Activated naive CD8-positive, alpha-beta T cell treated with anti-CD3 and anti-CD28 coated beads, Interleukin-2, amount 10 ng/mL, durations not matched to agents 7 days and 5 days (primary cell): ENCODE measurements at regions of chr16 and their contacts with region 1.

Region 1: DNA sequence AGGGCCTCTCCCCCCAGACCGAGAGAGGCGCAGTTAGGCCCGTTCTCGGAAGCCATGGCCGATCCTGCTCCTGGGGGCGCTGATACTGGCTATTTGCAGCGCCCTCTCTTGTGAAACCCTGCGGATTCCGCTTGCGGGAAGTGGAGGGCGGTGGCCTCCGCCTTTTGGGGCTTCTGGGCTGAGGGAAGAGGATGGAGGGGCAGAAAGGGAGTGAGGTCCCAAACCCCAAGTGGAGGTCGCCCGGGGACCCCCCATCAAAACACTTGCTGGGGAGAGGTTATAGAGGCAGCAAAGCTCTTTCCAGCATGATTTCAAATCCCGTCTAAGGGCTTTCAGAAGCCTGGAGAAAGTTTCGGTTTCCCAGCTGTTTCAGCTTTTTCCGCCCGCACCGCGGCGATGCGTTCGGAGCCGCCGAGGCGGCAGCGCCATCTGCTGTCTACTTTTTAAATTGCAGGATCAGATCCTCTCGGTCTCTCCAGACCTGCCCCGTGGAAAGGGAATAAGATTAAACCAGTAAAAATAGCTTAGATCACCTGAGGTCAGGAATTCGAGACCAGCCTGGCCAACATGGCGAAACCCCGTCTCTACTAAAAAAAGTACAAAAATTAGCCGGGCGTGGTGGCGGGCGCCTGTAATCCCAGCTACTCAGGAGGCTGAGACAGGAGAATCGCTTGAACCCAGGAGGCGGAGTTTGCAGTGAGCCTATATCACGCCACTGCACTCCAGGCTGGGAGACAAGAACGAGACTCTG is 15.8 kb downstream of the SNX20 start:
- DNase-seq: peak; percentile 87
- ATAC-seq: peak; percentile 26
- H3K4me3 Mint-ChIP-seq: peak overlapping the region; percentile 79
- H3K27ac Mint-ChIP-seq: peak overlapping the region; percentile 93
- H3K4me1 Mint-ChIP-seq: peaks cover 40% of the 10 kb centered on the region
- H3K27me3 Mint-ChIP-seq: no peaks in the 10 kb centered on the region

Region 2: DNA sequence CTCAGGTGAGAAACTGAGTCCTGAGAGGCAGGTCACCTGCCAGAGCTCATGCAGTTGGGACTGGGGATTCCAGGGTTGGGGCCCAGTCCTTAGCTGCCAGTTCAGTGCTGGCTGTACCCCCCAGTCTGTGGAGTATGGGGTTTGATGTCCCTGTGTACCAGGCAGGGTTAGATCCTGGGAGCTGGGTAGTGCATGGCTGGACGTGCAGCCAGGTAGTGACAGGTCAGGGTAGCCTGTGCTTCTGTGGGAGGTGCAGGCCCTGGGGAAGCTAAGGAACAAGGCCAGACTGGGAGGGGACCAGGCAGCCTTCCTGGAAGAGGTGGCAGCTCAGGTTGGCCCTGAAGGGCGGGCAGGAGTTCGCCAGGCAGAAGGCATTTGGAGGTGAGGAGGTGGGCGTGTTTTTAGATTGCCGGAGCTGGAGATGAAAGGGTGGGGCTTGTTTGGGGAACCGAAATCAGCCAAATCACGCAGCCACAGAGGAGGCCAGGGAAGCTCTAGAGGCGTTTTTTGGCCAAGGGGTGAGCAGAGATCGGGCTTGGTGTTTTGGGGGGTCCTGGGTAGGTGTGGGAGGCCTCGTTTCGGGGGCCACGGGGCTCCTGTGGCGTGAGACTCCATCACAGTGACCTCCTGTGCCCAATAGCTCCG is 391.5 kb before region 1 on chr16:
- POLR2A ChIA-PET with region 1: interaction called, 12 read pairs
- DNase-seq: no peak
- ATAC-seq: peak; percentile 20
- H3K4me3 Mint-ChIP-seq: peak overlapping the region; percentile 93
- H3K27ac Mint-ChIP-seq: peak overlapping the region; percentile 99
- H3K4me1 Mint-ChIP-seq: peaks cover 77% of the 10 kb centered on the region
- H3K27me3 Mint-ChIP-seq: no peaks in the 10 kb centered on the region

Region 3: DNA sequence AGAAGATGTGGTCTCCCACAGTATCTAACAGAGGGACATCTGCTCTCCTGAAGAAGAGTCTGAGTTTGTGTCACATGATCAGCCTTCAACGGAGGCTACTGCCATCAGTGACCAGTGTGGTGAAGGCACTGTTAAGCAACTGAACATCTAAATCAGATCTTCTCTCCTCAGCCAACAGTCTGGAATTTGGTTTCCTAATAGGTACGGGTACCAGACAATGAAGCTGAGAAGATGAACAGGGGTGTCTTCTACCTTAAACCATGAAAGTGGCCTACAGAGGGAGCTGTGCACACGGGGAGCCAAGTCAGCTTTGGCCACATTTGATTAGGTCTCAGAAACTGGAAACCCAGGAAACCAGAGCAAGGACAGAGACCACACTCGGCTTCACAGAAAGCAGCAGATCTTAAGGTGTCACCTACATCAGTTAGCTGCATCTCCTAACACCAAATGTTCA is 338.3 kb before region 1 on chr16:
- POLR2A ChIA-PET with region 1: interaction called, 20 read pairs
- DNase-seq: peak; percentile 42
- ATAC-seq: peak; percentile 92
- H3K4me3 Mint-ChIP-seq: peak overlapping the region; percentile 26
- H3K27ac Mint-ChIP-seq: peak overlapping the region; percentile 73
- H3K4me1 Mint-ChIP-seq: peaks cover 32% of the 10 kb centered on the region
- H3K27me3 Mint-ChIP-seq: no peaks in the 10 kb centered on the region

Region 4: DNA sequence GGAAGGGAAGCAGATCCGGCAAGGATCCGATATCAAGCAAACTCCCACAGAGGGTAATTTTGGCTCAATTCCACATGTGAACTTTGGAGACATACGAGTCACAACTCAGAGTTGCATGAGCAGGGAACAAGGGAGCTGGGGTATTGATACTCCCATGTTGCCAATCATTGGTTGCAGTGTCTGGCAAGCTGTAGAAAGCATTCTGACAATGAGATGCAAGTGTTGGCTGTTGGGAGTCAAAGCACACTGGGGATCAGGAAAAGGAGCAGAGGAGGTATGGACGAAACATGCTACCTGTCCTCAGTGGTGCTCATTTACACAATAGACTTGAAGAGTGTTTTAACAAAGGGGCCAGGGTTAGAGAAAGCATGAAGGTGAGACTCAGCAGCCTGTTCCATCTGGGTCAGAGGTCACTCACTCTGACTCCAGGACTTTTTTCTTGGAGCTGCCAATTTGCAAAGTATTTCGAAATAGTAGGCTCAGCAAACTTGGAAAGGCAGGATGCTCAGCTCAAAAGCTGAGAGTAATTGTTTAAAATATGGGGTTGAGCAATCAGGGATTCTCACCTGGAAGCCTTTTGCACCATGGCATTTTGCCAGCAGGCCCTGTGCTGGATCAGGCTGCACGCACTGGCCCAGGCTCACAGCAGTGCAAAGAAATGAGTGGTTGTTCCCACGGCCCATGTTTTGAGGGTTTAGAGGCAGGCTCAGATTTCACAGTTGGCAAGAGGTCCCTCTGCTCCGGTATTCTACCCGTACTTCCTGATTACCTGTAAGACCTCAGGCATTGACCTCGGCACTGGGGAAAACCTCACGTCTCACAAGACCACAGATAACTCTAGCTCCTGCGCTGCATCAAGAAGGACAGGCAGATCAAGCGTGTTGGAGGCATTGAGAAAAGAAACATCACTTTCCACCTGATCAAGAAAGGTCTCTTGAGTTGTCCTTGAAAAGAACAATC is 134.7 kb before region 1 on chr16:
- POLR2A ChIA-PET with region 1: no interaction called
- DNase-seq: no peak
- ATAC-seq: no peak
- H3K4me3 Mint-ChIP-seq: no peak overlapping the region
- H3K27ac Mint-ChIP-seq: no peak overlapping the region
- H3K4me1 Mint-ChIP-seq: no peaks in the 10 kb centered on the region
- H3K27me3 Mint-ChIP-seq: peaks cover 22% of the 10 kb centered on the region

Region 5: DNA sequence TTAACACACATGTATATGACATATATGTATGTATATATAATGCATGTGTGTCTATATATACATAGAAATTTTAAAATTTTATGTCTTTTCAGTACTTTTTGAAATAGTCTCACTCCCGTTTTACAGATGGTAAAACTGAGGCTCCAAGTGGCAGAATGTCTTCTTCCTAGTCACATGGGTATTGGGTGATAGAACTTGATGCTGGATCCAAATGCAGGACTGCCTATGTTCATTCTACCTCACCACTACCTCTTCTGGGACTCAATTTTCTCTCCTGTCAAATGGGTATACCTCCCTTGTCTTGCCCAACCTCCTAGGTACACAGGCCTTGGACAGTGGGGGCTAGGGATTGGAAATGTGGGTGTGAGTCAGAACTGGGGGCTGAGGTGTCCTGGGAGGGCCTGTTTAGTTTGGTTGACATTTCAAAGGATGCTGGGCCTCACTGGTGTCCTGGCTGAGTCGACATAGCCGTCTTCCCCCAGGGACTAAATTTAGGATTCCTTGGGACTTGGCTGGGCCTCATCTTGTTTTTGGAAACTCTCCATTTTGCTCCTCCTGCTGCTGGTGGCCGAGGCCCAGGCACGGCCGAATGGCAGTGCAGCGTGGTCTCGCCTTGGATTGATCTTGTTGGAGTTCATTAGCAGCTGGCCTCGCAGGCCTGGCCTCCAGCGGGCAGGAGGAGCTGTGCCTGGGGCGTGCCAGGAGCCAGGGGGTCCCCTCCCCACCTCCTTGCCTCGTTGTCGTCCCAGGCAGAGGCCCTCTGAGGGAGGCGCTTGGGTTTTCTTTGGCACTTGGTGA is 91.2 kb before region 1 on chr16:
- POLR2A ChIA-PET with region 1: no interaction called
- DNase-seq: no peak
- ATAC-seq: no peak
- H3K4me3 Mint-ChIP-seq: no peak overlapping the region
- H3K27ac Mint-ChIP-seq: no peak overlapping the region
- H3K4me1 Mint-ChIP-seq: peaks cover 2% of the 10 kb centered on the region
- H3K27me3 Mint-ChIP-seq: no peaks in the 10 kb centered on the region

Region 6: DNA sequence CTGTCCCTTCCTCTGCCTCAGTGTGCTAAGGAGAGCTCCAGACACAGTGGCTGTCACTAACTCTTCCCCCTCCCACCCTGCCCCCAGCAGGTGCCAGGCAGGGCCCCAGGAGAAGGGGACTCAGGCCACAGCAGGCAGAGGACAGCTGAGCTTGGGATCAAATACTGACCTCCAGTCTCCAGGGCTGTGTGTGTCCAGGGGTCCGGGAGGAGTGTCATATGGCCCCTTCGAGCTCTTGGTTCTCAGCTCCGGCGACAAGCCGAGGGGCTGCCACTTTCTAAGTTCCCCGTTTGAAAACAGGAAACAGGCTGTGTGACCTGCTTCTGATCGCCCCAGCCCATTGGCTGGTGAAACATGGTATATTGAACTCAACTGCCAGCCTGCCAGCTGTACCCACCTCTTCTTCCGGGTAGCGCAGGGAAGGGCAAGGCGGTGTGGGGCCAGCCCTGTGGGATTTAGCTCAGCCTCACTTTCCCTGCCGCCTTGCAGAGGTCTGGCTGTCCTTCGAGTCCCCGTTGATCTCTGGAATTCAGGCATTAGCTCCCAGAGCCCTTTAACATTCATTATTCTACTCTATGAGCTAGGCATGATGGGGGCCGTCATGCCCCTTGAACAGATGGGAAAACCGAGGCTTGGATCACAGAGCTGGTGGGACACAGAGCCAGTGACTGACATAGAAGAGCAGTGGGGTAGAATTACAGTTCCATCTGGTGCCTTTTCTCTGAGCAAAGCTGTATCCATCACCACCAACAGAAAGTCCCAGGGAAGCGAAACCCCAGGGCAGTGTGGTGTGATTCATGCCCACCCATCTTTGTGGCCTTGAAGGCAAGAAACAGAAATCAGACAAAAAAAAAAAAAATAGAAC is 15.9 kb after region 1 on chr16 and contains the start of gene SNX20:
- POLR2A ChIA-PET with region 1: interaction called, 69 read pairs
- DNase-seq: peak; percentile 64
- ATAC-seq: peak; percentile 66
- H3K4me3 Mint-ChIP-seq: peak within 1 kb of the TSS; percentile 92
- H3K27ac Mint-ChIP-seq: peak within 1 kb of the TSS; percentile 89
- H3K4me1 Mint-ChIP-seq: peaks cover 73% of the 10 kb centered on the region
- H3K27me3 Mint-ChIP-seq: no peaks in the 10 kb centered on the region
- total RNA-seq, gene SNX20: 70.6 to 76.3 TPM

Region 7: GRCh38 chr16:50709053-50709684 is 43.9 kb after region 1 on chr16:
- POLR2A ChIA-PET with region 1: no interaction called
- DNase-seq: no peak
- ATAC-seq: no peak
- H3K4me3 Mint-ChIP-seq: no peak overlapping the region
- H3K27ac Mint-ChIP-seq: peak overlapping the region; percentile 18
- H3K4me1 Mint-ChIP-seq: peaks cover 12% of the 10 kb centered on the region
- H3K27me3 Mint-ChIP-seq: no peaks in the 10 kb centered on the region

Region 8: GRCh38 chr16:50741808-50742575 is 76.7 kb after region 1 on chr16 and contains the start of gene CYLD:
- POLR2A ChIA-PET with region 1: interaction called, 144 read pairs
- DNase-seq: peak; percentile 98
- ATAC-seq: peak; percentile 97
- H3K4me3 Mint-ChIP-seq: peak within 1 kb of the TSS; percentile 96
- H3K27ac Mint-ChIP-seq: peak within 1 kb of the TSS; percentile 95
- H3K4me1 Mint-ChIP-seq: peaks cover 41% of the 10 kb centered on the region
- H3K27me3 Mint-ChIP-seq: no peaks in the 10 kb centered on the region
- total RNA-seq, gene CYLD: 166 to 172 TPM

Region 9: GRCh38 chr16:50806099-50807062 is 141.1 kb after region 1 on chr16:
- POLR2A ChIA-PET with region 1: interaction called, 11 read pairs
- DNase-seq: peak; percentile 78
- ATAC-seq: peak; percentile 98
- H3K4me3 Mint-ChIP-seq: peak overlapping the region; percentile 83
- H3K27ac Mint-ChIP-seq: peak overlapping the region; percentile 74
- H3K4me1 Mint-ChIP-seq: peaks cover 14% of the 10 kb centered on the region
- H3K27me3 Mint-ChIP-seq: no peaks in the 10 kb centered on the region